AG04450 (cell line): ENCODE measurements at regions of chr7 and their contacts with region 1.

Region 1: DNA sequence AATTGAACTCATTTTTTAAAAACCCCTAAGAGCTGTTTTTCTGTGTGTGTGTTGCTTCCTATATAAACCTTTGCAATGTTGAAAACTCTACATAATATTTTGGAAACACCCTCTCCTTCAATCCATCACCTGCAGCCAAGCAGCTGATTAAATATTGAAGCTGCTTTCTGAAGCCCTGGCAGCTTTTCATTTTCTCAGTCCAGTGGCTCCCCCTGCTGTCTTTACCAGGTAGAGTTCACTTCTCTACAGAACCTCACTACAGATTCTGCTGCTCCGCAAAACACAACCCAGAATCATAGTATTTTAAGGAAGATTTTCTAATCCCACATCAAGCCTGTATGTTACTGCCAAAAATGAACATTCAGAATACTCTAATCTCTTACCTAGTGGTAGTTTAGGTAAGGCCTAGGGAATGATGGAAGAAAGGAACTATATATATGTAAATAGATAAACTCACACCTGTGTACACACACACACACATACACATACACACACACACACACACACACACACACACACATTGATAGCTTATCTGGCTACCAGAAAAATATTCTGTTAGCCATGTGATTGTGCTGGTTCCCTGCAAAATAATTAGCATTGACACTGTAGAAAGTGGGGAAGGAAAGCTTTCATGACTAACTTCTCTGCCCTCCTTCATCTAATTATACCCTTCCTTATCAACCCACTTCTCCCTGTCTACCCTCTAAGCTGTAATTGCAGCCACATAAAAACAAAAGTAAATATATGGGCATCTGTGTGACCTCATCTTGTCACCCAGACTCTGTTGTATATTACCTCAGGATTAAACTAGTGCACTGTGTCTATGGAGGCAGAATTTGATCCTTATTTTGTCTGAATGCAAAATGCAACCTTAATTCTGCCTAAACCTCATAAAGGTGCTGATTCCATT is 229.5 kb upstream of the FZD1 start:
- DNase-seq: peak; percentile 29
- H3K4me3 ChIP-seq: no peak overlapping the region
- H3K27ac ChIP-seq: no peak overlapping the region
- H3K27me3 ChIP-seq: no peaks in the 10 kb centered on the region
- CTCF ChIP-seq: peak; percentile 79

Region 2: DNA sequence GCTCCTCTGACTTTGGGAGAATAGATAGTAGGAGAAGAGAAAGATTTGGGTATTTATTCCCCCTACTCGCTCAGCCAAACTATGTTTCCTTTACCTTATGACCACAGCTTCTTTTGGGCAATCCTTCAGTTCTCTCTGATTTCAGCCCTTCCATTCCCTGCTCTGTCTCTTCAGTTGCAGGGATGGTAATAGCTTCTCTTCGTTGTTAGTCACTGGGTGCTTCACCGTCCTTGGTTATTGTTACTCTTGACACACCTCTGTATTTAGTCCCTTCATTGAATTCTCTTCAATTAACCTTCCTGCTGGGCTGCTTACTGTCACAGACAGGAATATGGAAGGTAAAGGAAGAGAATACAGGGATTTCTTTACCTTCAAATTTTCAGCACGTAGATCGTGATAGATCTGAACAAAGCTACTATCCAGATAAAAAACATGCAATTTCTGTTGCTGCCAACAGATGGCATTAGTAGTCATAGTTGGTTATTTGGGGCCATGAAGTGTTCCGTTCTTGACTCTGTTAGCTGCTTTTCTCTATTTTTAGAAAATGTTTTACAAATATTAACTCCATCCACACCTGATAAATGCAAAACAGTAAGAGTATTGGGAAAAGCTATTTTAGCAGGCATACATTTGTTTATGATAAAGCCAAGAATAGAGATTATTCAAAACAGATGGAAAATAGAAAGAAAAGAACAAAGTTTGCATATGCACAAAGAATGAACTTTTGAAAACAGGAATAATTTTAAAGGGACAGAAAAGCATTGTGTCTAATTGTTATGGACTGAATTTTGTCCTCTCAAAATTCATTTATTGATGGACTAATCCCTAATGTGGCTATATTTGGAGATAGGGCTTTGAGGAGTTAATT is 579.3 kb before region 1 on chr7:
- CTCF ChIA-PET with region 1: interaction called, 47 read pairs
- POLR2A ChIA-PET with region 1: no interaction called
- DNase-seq: peak; percentile 1
- H3K4me3 ChIP-seq: no peak overlapping the region
- H3K27ac ChIP-seq: no peak overlapping the region
- H3K27me3 ChIP-seq: no peaks in the 10 kb centered on the region
- CTCF ChIP-seq: peak; percentile 62

Region 3: DNA sequence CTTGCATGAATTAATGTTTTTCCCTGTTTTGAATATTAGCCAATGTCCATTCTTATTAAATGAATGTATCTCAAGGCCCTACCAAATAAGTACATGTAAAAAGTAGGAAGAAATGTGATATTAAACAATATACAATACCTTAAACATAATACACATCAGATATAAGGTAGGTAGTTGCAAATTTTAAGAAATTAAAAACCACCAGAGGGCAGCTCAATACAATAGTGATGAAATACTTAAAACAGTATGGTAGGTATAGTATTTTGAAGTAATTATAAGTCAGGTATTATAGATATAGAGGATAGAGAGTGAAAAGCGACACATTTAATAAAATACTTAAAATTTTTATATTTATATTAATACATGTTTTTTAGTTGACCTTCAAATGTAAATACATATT is 482.2 kb before region 1 on chr7:
- CTCF ChIA-PET with region 1: interaction called, 12 read pairs
- POLR2A ChIA-PET with region 1: no interaction called
- DNase-seq: no peak
- H3K4me3 ChIP-seq: no peak overlapping the region
- H3K27ac ChIP-seq: no peak overlapping the region
- H3K27me3 ChIP-seq: no peaks in the 10 kb centered on the region
- CTCF ChIP-seq: peak; percentile 34; the same call in 1 of the 2 replicates

Region 4: DNA sequence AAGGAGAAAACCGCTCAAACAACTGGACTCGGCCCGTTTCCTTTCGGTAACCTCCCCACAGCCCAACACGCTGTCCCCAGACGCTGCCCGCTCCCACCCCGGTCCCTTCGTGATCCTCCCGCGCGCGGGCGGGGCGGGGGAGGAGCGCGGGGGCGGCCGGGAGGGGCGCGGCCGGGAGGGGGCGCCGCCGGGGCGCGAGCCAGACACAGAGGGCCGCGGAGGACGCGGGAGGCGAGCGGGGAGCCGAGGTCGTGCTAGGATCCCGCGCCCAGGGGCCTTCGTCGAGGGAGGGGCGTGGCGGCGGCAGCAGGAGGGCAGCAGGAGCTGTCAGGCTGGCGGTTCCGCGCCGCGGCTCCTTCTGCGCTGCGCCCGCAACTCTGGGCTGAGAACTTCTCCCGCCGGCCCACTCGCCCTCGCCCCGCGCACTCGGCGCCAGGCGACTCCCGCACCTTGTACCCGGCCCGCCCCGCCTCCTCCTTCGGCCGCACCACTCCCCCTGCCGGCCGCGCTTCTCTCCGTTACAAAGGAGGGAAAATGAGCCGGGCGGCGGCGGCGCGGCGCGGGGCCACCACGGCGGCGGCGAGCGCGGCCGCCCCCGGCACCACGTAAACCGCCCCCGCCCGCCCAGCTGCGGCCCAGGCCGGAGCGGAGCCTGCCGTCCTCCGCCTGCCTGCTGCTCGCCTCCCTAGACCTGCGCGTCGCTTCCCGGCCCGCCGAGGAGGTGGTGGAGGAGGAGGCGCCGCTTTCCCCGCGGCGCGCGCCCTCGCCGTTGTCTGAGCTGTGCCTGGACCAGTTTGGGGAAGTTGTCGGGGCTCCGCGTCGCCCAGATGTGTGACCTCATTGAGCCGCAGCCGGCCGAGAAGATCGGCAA is 438.7 kb before region 1 on chr7 and contains the start of gene CDK14:
- CTCF ChIA-PET with region 1: interaction called, 10 read pairs
- POLR2A ChIA-PET with region 1: interaction called, 4 read pairs
- DNase-seq: no peak
- H3K4me3 ChIP-seq: peak within 1 kb of the TSS; percentile 79
- H3K27ac ChIP-seq: peak within 1 kb of the TSS; percentile 72
- H3K27me3 ChIP-seq: no peaks in the 10 kb centered on the region
- CTCF ChIP-seq: peak; percentile 46
- polyA plus RNA-seq, gene CDK14: 24.6 and 28.4 TPM in 2 replicates

Region 5: DNA sequence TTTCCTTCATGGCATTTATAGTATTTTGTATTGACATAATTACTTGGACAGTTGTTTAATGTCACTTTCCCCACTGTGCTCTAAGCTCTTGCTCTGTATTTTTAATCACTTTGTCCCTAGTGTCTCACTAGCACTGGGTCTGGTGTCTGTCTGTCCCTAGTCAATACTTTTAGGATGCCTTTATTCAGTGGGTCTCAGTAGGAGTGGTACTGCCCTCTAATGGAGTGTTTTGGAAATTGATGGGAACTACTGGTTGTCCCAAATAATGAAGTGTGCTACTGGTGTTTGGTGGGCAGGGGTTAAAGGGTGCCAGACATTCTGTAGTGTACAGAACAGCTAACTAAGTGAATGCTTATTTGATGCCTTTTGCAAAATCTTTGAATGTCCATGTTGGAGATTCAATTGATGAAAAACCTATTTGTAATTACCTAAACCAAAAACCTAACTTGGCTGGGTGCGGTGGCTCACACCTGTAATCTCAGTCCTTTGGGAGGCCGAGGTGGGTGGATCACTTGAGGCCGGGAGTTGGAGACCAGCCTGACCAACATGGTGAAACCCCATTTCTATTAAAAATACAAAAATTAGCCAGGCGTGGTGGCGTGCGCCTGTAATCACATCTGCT is 405.3 kb before region 1 on chr7:
- CTCF ChIA-PET with region 1: interaction called, 11 read pairs
- POLR2A ChIA-PET with region 1: no interaction called
- DNase-seq: peak; percentile 26
- H3K4me3 ChIP-seq: no peak overlapping the region
- H3K27ac ChIP-seq: no peak overlapping the region
- H3K27me3 ChIP-seq: no peaks in the 10 kb centered on the region
- CTCF ChIP-seq: peak; percentile 70

Region 6: GRCh38 chr7:91045606-91046005 is 10.9 kb after region 1 on chr7:
- CTCF ChIA-PET with region 1: interaction called, 16 read pairs
- POLR2A ChIA-PET with region 1: no interaction called
- DNase-seq: no peak
- H3K4me3 ChIP-seq: no peak overlapping the region
- H3K27ac ChIP-seq: no peak overlapping the region
- H3K27me3 ChIP-seq: no peaks in the 10 kb centered on the region
- CTCF ChIP-seq: no peak